BJ (cell line): ENCODE measurements at regions of chr12 and their contacts with region 1.

Region 1: DNA sequence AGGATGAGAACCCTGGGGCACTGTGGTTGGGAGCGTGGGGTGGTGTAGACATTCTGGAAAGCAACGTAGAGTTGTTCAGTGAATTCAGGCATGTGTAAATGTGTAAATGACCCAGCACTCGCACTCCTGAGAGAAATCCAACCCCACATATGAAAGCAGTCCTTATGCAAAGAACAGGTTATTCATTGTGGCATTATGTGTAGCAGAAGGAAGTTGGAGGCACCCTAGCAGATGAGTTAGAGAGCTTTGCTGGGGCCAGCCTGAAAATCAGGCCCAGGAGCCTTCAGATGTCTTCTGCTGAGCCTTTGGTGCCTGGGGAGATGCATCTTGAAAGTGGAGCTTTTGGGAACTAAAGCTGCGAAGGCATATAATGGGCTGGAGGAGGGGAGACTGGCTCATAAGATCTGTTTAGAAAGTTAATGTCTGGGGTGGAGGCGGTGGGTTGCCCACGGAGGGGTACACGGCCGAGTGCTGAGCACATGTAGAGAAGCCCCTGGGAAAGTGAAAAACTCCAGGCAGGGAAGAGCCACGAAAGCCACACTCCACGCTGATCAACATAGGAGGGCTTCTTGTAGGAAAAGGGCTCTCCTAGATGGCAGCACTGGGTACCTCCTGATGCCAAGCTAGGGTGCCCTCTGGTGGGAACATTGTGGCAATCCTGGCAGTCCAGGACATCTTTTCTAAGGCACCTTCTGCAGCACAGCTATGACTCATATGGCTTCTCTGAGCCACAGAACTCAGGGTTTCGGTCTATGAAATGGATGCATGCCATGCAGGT is 6.0 kb upstream of the KRT83 start:
- DNase-seq: peak; percentile 70
- H3K4me3 ChIP-seq: no peak overlapping the region
- H3K27me3 ChIP-seq: peaks cover 2% of the 10 kb centered on the region; the same call in 1 of the 2 replicates
- CTCF ChIP-seq: peak; percentile 94

Region 2: DNA sequence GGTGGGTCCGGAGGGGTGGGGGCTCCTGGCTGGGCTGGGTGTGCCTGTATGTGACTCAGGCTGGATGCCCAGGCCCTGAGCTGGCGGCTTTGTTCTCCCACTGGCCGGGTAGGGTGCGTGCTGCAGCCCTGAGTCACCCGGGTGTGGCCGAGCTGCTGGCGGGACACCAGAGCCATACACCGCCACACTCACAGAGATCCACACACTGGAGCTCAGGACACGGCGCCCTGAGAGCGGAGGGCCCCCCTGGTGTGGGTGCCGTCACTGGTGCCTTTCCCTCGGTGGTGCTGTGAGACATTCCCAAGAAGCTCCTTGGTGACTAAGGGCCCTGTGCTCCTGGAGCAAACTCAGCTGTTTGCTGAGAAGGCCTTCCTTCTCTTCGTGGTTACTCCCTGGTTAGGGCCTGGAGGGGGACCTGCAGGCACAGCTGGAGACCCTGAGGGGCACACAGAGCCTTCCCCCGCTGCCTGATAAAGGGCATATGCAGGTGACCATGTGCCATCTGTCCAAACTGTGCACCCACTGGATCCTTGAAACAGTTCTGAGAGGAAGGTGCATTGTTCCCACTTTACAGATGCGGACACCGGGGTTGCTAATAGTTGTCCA is 179.8 kb before region 1 on chr12:
- CTCF ChIA-PET with region 1: interaction called, 12 read pairs
- POLR2A ChIA-PET with region 1: no interaction called
- DNase-seq: peak; percentile 97
- H3K4me3 ChIP-seq: no peak overlapping the region
- H3K27me3 ChIP-seq: no peaks in the 10 kb centered on the region
- CTCF ChIP-seq: no peak

Region 3: DNA sequence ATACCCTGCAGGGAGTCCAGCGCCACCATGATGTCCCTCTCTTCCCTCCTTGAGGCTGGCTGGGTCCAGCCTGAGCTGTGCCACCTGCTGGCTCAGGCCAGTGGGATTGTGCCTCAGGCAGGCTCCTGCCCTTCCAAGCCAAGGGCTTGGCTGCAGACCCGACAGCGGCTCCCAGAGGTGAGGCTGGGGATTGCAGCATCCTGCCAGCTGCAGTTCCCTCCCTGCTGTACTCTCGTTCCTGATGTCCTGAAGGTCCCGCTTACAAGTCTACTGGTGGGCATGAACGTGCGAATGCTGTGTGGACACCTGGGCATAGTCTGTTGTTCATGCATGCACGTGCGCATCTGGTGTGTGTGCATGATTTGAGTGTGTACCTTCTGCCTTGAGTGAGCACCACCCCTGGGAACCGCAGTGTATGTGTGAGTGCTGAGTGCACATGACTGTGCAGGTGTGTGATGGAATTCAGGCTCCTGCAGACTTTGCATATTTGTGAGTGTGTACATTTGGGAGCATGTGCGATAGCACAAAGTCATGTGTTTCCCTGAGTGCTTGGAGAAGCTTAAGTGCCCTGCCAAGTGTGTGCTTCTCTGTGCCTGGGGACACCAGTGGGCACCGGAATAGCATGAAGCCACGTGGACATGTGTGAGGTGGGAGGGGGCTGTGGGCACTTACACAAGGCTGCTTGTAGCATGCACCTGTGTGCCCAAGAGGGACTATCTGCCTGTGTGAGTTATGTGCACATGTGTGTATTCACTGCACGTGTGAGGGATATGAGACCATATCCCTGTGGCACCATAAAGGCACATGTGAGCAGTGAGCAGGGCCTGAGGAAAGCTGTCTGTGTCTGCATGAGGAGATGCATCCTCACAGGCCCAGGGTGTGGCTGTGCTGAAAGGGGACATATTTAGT is 113.5 kb before region 1 on chr12:
- CTCF ChIA-PET with region 1: interaction called, 33 read pairs
- POLR2A ChIA-PET with region 1: no interaction called
- DNase-seq: no peak
- H3K4me3 ChIP-seq: no peak overlapping the region
- H3K27me3 ChIP-seq: no peaks in the 10 kb centered on the region
- CTCF ChIP-seq: peak; percentile 100

Region 4: DNA sequence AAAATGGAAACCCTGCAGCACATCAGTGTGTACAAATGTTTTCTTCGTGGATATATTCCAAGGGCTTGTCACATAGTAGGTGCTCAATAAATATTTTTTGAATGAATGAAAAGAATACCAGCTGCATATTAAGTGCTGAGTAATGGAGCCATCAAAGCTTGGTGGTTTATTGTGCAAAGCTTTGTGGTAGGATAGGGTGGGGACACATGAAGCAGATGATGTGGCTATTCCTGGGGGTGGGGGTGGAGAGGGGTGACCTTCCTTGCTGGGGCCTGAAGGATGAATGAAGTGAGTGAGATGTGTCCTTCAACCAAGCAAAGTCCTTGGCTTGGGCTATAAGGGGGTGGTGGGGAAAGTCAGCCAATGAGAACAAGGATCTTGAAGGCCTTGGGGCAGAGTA is 31.6 kb before region 1 on chr12:
- CTCF ChIA-PET with region 1: interaction called, 16 read pairs
- POLR2A ChIA-PET with region 1: no interaction called
- DNase-seq: no peak
- H3K4me3 ChIP-seq: no peak overlapping the region
- H3K27me3 ChIP-seq: peaks cover 1% of the 10 kb centered on the region; the same call in 1 of the 2 replicates
- CTCF ChIP-seq: no peak

Region 5: DNA sequence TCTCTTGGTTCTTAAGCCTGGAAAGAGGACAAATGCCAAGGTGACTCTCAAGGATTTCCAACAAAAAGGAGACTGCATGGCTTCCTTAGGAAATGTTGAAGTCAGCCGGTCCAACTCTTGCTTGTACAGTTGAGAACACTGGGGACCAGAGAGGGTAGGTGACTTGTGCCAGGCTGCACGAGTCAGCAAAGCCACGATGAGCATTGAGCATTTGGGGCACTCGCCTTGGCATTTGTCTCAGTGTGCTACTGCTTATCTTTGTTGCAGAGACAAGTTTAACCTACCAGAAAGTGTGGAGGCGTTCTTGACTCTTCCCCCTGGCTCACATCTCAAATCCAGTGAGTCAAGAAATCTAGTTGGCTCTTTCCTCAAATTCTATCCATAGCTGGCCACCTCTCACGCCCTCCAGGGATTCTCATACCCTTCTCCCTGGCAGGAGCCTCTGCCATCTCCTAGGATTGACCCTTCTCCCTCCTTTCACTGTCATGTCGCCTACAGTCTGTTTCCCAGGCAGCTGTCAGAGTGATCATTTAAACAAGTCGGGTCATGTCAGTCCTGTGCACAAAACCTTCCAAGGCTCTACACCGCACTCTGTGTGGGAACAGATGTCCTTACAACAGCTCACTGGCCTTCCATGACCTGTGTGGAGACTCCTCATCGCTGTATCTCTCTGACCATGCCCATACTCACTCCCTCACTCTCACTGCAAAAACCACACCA is 11.2 kb after region 1 on chr12:
- CTCF ChIA-PET with region 1: interaction called, 22 read pairs
- POLR2A ChIA-PET with region 1: no interaction called
- DNase-seq: no peak
- H3K4me3 ChIP-seq: no peak overlapping the region
- H3K27me3 ChIP-seq: peaks cover 10% of the 10 kb centered on the region
- CTCF ChIP-seq: no peak

Region 6: GRCh38 chr12:52372216-52373154 is 45.2 kb after region 1 on chr12:
- CTCF ChIA-PET with region 1: interaction called, 18 read pairs
- POLR2A ChIA-PET with region 1: no interaction called
- DNase-seq: peak; percentile 47
- H3K4me3 ChIP-seq: no peak overlapping the region
- H3K27me3 ChIP-seq: peaks cover 12% of the 10 kb centered on the region
- CTCF ChIP-seq: peak; percentile 93

Region 7: DNA sequence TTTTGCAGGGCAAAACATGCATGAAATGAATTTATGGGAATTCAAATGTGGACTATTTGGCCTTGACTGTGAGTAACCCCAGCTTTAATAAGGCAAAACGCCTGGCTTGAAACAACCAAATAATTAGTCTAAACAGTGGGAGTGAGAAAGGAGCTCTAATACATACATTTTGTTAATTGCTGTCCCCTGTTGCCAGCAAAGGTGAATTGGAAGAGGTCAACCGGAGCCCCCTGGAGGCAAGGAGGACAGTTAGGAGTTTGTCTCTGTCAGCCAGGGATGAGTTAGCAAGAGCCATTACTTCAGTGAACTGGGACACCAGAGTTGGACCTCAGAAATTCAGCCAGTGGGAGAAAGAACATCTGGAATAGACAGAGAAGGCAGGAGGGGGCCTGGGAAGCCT is 432.5 kb after region 1 on chr12:
- CTCF ChIA-PET with region 1: no interaction called
- POLR2A ChIA-PET with region 1: no interaction called
- DNase-seq: no peak
- H3K4me3 ChIP-seq: no peak overlapping the region
- H3K27me3 ChIP-seq: no peaks in the 10 kb centered on the region; the same call in 1 of the 2 replicates
- CTCF ChIP-seq: no peak